WTC11 (cell line): ENCODE measurements at regions of chr17 and their contacts with region 1.

Region 1: DNA sequence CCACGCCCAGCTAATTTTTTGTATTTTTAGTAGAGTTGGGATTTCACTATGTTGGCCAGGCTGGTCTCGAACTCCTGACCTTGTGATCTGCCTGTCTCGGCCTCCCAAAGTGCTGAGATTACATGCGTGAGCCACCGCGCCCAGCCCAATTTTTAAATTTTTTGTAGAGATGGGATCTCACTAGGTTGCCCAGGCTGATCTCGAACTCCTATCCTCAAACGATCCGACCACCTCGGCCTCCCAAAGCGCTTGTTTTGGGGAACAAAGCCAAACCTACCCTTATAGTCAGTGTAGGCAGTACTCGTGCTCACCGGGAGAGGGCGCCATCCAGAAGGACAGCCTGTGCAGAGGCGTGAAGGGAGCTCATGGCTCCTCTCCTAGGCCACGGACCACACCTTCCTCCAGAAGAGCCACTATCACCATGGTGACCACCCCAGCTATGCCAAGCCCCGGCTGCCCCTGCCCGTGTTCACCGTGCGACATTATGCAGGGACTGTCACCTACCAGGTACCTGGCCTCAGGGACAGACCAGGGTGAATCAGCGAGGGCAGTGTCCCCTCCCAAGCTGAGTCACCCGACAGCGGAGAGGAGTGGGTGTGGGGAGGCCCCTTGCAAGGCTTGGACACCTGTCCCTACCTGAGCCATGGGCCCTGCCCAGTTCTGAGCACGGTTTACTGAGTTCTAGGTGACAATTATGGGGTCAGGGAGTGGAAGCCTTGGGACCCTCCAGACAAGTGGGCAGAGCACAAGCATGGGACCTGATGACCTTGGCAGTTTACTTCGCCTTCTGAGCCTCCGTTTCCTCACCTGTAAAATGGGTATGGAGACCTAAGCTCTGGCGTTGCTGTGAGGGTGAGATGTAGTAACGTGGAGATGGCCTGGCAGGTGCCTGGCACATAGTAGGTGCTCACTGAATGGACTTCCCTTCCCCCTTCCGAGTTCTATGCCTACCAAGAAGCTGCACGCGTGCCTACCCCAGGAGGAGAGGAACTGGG is 13.8 kb downstream of the MYO15B start:
- DNase-seq: peak; percentile 94
- ATAC-seq: peak; percentile 96
- H3K4me3 Mint-ChIP-seq: no peak overlapping the region
- H3K27ac Mint-ChIP-seq: no peak overlapping the region
- H3K4me1 Mint-ChIP-seq: no peaks in the 10 kb centered on the region
- H3K27me3 Mint-ChIP-seq: no peaks in the 10 kb centered on the region
- CTCF ChIP-seq: peak; percentile 96

Region 2: GRCh38 chr17:75361996-75362395 is 239.4 kb before region 1 on chr17:
- CTCF ChIA-PET with region 1: no interaction called
- POLR2A ChIA-PET with region 1: no interaction called
- DNase-seq: no peak
- ATAC-seq: no peak
- H3K4me3 Mint-ChIP-seq: no peak overlapping the region
- H3K27ac Mint-ChIP-seq: 0 out of 2 replicates have a peak overlapping the region, but pooled peaks have one; percentile 1
- H3K4me1 Mint-ChIP-seq: peaks cover 39% of the 10 kb centered on the region
- H3K27me3 Mint-ChIP-seq: no peaks in the 10 kb centered on the region
- CTCF ChIP-seq: no peak

Region 3: GRCh38 chr17:75515496-75516254 is 85.7 kb before region 1 on chr17 and contains the start of gene CASKIN2:
- CTCF ChIA-PET with region 1: interaction called, 21 read pairs
- POLR2A ChIA-PET with region 1: no interaction called
- DNase-seq: peak; percentile 98
- ATAC-seq: peak; percentile 76
- H3K4me3 Mint-ChIP-seq: peak within 1 kb of the TSS; percentile 80
- H3K27ac Mint-ChIP-seq: no peak within 1 kb of the TSS
- H3K4me1 Mint-ChIP-seq: peaks cover 20% of the 10 kb centered on the region
- H3K27me3 Mint-ChIP-seq: no peaks in the 10 kb centered on the region
- CTCF ChIP-seq: peak; percentile 90
- total RNA-seq, gene CASKIN2: 31.3 to 32.2 TPM (median 31.9 TPM) in 3 replicates

Region 4: DNA sequence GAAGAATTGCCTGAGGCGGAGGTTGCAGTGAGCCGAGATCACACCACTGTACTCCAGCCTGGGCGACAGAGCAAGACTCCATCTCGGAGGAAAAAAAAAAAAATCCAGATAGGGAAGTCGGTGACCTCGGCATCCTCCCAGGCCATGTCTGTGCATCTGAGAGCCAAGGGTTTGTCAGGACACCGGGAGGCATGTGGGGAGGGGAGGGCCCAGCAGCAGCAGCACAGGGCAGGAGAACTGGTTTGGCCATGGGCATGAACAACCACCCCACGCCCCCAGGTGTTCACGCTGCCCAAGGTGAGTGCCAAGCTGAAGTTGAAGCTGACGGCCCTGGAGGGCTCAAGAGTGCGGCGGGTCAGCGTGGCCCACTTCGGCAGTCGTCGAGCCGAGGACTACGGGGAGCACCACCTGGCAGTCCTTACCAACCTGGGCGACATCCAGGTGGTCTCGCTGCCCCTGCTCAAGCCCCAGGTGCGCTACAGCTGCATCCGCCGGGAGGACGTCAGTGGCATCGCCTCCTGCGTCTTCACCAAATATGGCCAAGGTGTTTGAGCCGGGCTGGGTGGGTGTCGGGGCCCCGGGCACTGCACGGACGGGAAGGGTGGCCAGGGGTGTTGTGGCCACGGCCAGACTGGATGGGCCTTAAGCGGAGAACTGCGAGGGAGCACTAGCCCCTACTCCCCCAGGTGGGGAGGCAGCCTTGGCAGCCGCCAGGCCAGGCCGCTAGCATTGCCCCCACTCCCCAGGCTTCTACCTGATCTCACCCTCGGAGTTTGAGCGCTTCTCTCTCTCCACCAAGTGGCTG is 28.4 kb before region 1 on chr17:
- CTCF ChIA-PET with region 1: interaction called, 15 read pairs
- POLR2A ChIA-PET with region 1: no interaction called
- DNase-seq: no peak
- ATAC-seq: no peak
- H3K4me3 Mint-ChIP-seq: no peak overlapping the region
- H3K27ac Mint-ChIP-seq: no peak overlapping the region
- H3K4me1 Mint-ChIP-seq: no peaks in the 10 kb centered on the region
- H3K27me3 Mint-ChIP-seq: no peaks in the 10 kb centered on the region
- CTCF ChIP-seq: no peak

Region 5: GRCh38 chr17:75619506-75620431 is 18.4 kb after region 1 on chr17:
- CTCF ChIA-PET with region 1: interaction called, 158 read pairs
- POLR2A ChIA-PET with region 1: no interaction called
- DNase-seq: peak; percentile 88
- ATAC-seq: peak; percentile 89
- H3K4me3 Mint-ChIP-seq: no peak overlapping the region
- H3K27ac Mint-ChIP-seq: no peak overlapping the region
- H3K4me1 Mint-ChIP-seq: no peaks in the 10 kb centered on the region
- H3K27me3 Mint-ChIP-seq: no peaks in the 10 kb centered on the region
- CTCF ChIP-seq: peak; percentile 54; the same call in 1 of the 2 replicates

Region 6: DNA sequence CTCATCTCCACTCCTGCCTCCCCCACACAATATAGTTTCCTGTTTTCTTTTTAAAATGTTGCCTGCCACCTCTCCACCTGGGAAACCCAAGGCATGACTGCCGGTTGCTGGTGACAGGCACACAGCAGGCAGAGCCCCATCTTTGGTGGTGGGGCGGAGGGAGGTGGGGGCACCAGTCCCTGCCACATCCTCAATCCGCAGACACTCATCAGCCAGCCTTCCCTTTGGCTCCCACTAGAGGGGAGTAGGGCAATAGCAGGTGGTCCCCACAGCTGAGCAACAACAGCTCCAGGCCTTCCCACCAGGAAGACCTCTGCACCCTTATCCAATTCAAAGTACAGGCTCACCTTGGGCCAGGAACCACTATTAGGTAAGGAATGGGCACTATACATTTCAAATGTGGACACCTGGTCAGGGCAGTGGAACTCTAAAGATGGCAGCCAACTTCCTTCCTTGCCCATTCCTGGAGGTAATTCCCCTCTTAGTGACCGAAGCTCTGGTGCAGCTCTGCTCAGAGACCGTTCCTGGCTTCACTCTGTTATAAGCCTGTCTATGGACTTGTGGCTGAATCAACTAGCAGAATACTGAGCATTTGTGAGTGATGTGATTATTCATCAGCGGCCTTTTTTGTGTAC is 51.7 kb after region 1 on chr17:
- CTCF ChIA-PET with region 1: interaction called, 37 read pairs
- POLR2A ChIA-PET with region 1: no interaction called
- DNase-seq: peak; percentile 76
- ATAC-seq: peak; percentile 99
- H3K4me3 Mint-ChIP-seq: no peak overlapping the region
- H3K27ac Mint-ChIP-seq: peak overlapping the region; percentile 71; the same call in 1 of the 2 replicates
- H3K4me1 Mint-ChIP-seq: no peaks in the 10 kb centered on the region
- H3K27me3 Mint-ChIP-seq: no peaks in the 10 kb centered on the region
- CTCF ChIP-seq: peak; percentile 66; the same call in 1 of the 2 replicates

Region 7: GRCh38 chr17:75779231-75779986 is 178.1 kb after region 1 on chr17:
- CTCF ChIA-PET with region 1: interaction called, 10 read pairs
- POLR2A ChIA-PET with region 1: no interaction called
- DNase-seq: peak; percentile 94
- ATAC-seq: peak; percentile 85
- H3K4me3 Mint-ChIP-seq: peak overlapping the region; percentile 94
- H3K27ac Mint-ChIP-seq: peak overlapping the region; percentile 99
- H3K4me1 Mint-ChIP-seq: peaks cover 46% of the 10 kb centered on the region
- H3K27me3 Mint-ChIP-seq: peaks cover 4% of the 10 kb centered on the region
- CTCF ChIP-seq: 0 out of 2 replicates have a peak, but pooled peaks have one; percentile 11